ENCODE measurements at regions of chr4 and their contacts with region 1.

Region 1: GRCh38 chr4:99949034-99949998 is 759 bp downstream of the H2AZ1 start:
- DNase-seq: peak; percentile 71 to 93 (median 88)
- ATAC-seq: peak; percentile 28 to 37
- H3K4me3 Mint-ChIP-seq: no peak overlapping the region
- H3K27ac Mint-ChIP-seq: no peak overlapping the region
- H3K4me1 Mint-ChIP-seq: peaks cover 10 to 39% (median 30%) of the 10 kb centered on the region in 4 donors
- H3K27me3 Mint-ChIP-seq: no peaks in the 10 kb centered on the region

Region 2: DNA sequence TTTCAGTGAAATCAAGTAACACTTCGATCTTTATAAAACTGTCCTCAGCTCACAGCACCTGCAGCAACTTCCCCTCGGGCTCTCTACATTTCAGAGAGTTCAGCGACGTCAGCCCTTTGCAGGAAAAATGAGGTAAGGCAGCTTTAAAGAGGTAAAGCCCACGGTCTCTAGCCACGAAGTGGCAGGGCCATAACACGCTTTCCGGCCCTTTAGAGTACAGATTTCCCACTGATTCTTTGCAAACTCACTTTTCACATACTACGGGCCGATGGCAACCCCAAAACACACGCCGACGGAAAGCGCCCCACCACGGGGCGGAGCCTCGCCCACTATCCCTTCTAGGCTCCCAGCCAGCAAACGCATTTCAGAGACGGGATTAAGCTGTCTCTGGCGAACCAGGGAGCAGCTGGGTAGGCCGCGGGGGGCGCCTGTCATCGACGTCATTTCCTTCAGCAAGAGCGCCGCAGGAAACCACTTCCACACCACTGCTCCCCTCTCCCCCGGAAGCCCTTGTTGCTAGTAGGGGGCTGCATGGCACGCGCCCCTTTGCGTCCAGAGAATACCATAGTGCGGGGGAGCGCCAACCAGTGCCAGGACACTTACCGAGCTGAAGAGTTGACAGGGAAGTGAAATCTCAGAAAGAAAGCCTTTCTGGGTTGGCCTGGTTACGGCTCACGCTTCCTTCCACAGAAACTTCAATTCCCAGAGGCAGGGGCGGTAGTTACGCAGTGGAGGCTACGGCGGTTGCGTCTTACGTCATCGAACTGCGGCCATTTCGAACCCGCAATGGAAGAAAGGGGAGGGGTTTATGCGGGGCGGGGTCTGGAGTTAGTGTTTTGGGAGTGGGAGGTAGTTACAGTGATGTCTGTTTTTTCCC is 385.8 kb before region 1 on chr4 and contains the start of gene TRMT10A:
- POLR2A ChIA-PET with region 1: interaction called, 86 read pairs
- DNase-seq: peak; percentile 86 to 99 (median 97)
- ATAC-seq: peak; percentile 85 to 88
- H3K4me3 Mint-ChIP-seq: peak within 1 kb of the TSS; percentile 92 to 99 (median 96)
- H3K27ac Mint-ChIP-seq: peak within 1 kb of the TSS; percentile 97 to 100 (median 100)
- H3K4me1 Mint-ChIP-seq: peaks cover 2 to 29% (median 14%) of the 10 kb centered on the region in 4 donors
- H3K27me3 Mint-ChIP-seq: peaks cover 12 to 35% (median 15%) of the 10 kb centered on the region in 5 donors
- polyA plus RNA-seq, gene TRMT10A: 2.5 to 2.9 (median 2.6) TPM

Region 3: GRCh38 chr4:99816545-99817308 is 132.6 kb before region 1 on chr4 and contains the start of gene DAPP1:
- POLR2A ChIA-PET with region 1: interaction called, 14 read pairs
- DNase-seq: peak; percentile 39 to 88 (median 73)
- ATAC-seq: peak; percentile 96 to 97
- H3K4me3 Mint-ChIP-seq: peak within 1 kb of the TSS; percentile 85 to 95 (median 91)
- H3K27ac Mint-ChIP-seq: peak within 1 kb of the TSS; percentile 81 to 98 (median 96)
- H3K4me1 Mint-ChIP-seq: peaks cover 29 to 65% (median 62%) of the 10 kb centered on the region in 4 donors
- H3K27me3 Mint-ChIP-seq: no peaks in the 10 kb centered on the region
- polyA plus RNA-seq, gene DAPP1: 8.6 to 17.0 (median 12.2) TPM

Region 4: DNA sequence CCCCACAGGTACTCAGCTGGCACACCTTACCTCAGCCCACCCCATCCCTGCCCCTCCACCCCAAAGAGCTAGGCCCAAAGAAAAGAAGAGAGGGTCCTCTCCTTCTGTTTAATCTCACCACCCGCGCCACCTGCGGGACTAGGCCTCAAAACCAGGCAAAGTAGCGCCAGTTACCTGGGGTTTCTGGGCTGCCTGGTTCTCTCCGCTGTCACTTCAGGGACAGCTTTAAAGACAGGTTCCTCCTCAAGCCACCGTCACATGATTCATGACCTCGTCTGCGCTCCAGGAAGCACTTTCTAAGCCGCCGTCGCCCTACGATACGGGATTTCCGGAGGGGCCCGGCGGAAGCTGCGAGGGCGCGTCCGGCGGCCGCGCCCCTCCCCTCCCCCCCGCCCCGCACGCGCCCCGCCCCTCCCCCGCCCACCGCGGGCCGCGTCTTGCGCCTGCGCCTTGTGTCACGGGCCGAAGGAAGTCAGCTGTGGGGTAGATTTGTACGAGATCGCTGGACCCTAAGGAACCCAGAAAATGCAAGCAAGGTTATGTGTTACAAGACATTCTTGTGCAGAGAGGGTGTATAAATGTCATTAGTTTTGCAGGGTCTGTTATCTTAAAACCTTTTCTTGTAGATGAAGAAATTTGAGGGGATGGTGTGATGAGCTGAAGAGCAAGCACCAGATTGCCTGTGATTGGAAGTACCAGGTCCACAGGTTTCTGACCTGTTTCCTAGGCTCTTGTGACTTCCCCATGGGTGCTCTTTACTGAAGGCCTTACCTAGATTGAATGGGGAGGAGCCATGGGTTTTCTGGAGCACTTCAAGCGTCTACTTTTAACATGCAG is 54.9 kb before region 1 on chr4 and contains the start of gene LAMTOR3:
- POLR2A ChIA-PET with region 1: interaction called, 74 read pairs
- DNase-seq: peak; percentile 81 to 93 (median 88)
- ATAC-seq: peak; percentile 99
- H3K4me3 Mint-ChIP-seq: peak within 1 kb of the TSS; percentile 92 to 99 (median 98)
- H3K27ac Mint-ChIP-seq: peak within 1 kb of the TSS; percentile 96 to 99 (median 99)
- H3K4me1 Mint-ChIP-seq: peaks cover 17 to 53% (median 47%) of the 10 kb centered on the region in 4 donors
- H3K27me3 Mint-ChIP-seq: no peaks in the 10 kb centered on the region
- polyA plus RNA-seq, gene LAMTOR3: 29.0 to 35.6 (median 29.7) TPM

Region 5: GRCh38 chr4:99965674-99966350 is 16.5 kb after region 1 on chr4:
- POLR2A ChIA-PET with region 1: interaction called, 13 read pairs
- DNase-seq: peak in 4 of 10 donors; percentile 31 to 70 (median 60)
- ATAC-seq: peak; percentile 89 to 98
- H3K4me3 Mint-ChIP-seq: peak overlapping the region in 7 of 10 donors; percentile 3 to 59 (median 30)
- H3K27ac Mint-ChIP-seq: peak overlapping the region in 2 of 10 donors; percentile 3 to 4
- H3K4me1 Mint-ChIP-seq: peaks cover 3 to 18% (median 13%) of the 10 kb centered on the region in 4 donors
- H3K27me3 Mint-ChIP-seq: peaks cover 0 to 5% (median 0%) of the 10 kb centered on the region in 5 donors

Region 6: GRCh38 chr4:99986792-99987191 is 37.5 kb after region 1 on chr4:
- POLR2A ChIA-PET with region 1: no interaction called
- DNase-seq: no peak
- ATAC-seq: no peak
- H3K4me3 Mint-ChIP-seq: no peak overlapping the region
- H3K27ac Mint-ChIP-seq: no peak overlapping the region
- H3K4me1 Mint-ChIP-seq: no peaks in the 10 kb centered on the region
- H3K27me3 Mint-ChIP-seq: peaks cover 4 to 17% (median 11%) of the 10 kb centered on the region in 5 donors

Region 7: GRCh38 chr4:99998062-99998867 is 48.9 kb after region 1 on chr4:
- POLR2A ChIA-PET with region 1: no interaction called
- DNase-seq: peak in 1 of 10 donors; percentile 2
- ATAC-seq: no peak
- H3K4me3 Mint-ChIP-seq: no peak overlapping the region
- H3K27ac Mint-ChIP-seq: no peak overlapping the region
- H3K4me1 Mint-ChIP-seq: no peaks in the 10 kb centered on the region
- H3K27me3 Mint-ChIP-seq: peaks cover 0 to 3% (median 0%) of the 10 kb centered on the region in 5 donors